PC-3 (cell line): ENCODE measurements at regions of chr7 and their contacts with region 1.

Region 1: GRCh38 chr7:13742811-13743210 is 246.7 kb downstream of the ETV1 start:
- DNase-seq: peak; percentile 69
- ATAC-seq: peak; percentile 73
- H3K4me3 ChIP-seq: no peak overlapping the region
- H3K27ac ChIP-seq: peak overlapping the region; percentile 56
- H3K4me1 ChIP-seq: peaks cover 24% of the 10 kb centered on the region
- H3K27me3 ChIP-seq: no peaks in the 10 kb centered on the region
- CTCF ChIP-seq: peak; percentile 78

Region 2: GRCh38 chr7:13279854-13280435 is 462.9 kb before region 1 on chr7:
- CTCF ChIA-PET with region 1: interaction called, 3 read pairs
- POLR2A ChIA-PET with region 1: no interaction called
- intact Hi-C with region 1: loop called (anchors 5 kb)
- DNase-seq: peak; percentile 63
- ATAC-seq: no peak; the same call in 1 of the 2 replicates
- H3K4me3 ChIP-seq: no peak overlapping the region
- H3K27ac ChIP-seq: no peak overlapping the region
- H3K4me1 ChIP-seq: no peaks in the 10 kb centered on the region
- H3K27me3 ChIP-seq: no peaks in the 10 kb centered on the region
- CTCF ChIP-seq: peak; percentile 69

Region 3: GRCh38 chr7:13524076-13524475 is 218.7 kb before region 1 on chr7:
- CTCF ChIA-PET with region 1: interaction called, 3 read pairs
- POLR2A ChIA-PET with region 1: no interaction called
- intact Hi-C with region 1: loop called (anchors 1 kb)
- DNase-seq: no peak
- ATAC-seq: peak; percentile 60; the same call in 1 of the 2 replicates
- H3K4me3 ChIP-seq: no peak overlapping the region
- H3K27ac ChIP-seq: no peak overlapping the region
- H3K4me1 ChIP-seq: peaks cover 4% of the 10 kb centered on the region; the same call in 1 of the 2 replicates
- H3K27me3 ChIP-seq: no peaks in the 10 kb centered on the region
- CTCF ChIP-seq: no peak

Region 4: GRCh38 chr7:13778967-13779366 is 36.2 kb after region 1 on chr7:
- CTCF ChIA-PET with region 1: no interaction called
- POLR2A ChIA-PET with region 1: no interaction called
- intact Hi-C with region 1: loop called (anchors 2 kb)
- DNase-seq: peak; percentile 92
- ATAC-seq: peak; percentile 95
- H3K4me3 ChIP-seq: no peak overlapping the region
- H3K27ac ChIP-seq: peak overlapping the region; percentile 95
- H3K4me1 ChIP-seq: peaks cover 26% of the 10 kb centered on the region
- H3K27me3 ChIP-seq: no peaks in the 10 kb centered on the region
- CTCF ChIP-seq: no peak

Region 5: GRCh38 chr7:14381306-14381705 is 638.5 kb after region 1 on chr7:
- CTCF ChIA-PET with region 1: no interaction called
- POLR2A ChIA-PET with region 1: no interaction called
- intact Hi-C with region 1: no loop called
- DNase-seq: peak; percentile 24
- ATAC-seq: peak; percentile 49
- H3K4me3 ChIP-seq: no peak overlapping the region
- H3K27ac ChIP-seq: no peak overlapping the region
- H3K4me1 ChIP-seq: peaks cover 10% of the 10 kb centered on the region; the same call in 1 of the 2 replicates
- H3K27me3 ChIP-seq: no peaks in the 10 kb centered on the region
- CTCF ChIP-seq: no peak

Region 6: DNA sequence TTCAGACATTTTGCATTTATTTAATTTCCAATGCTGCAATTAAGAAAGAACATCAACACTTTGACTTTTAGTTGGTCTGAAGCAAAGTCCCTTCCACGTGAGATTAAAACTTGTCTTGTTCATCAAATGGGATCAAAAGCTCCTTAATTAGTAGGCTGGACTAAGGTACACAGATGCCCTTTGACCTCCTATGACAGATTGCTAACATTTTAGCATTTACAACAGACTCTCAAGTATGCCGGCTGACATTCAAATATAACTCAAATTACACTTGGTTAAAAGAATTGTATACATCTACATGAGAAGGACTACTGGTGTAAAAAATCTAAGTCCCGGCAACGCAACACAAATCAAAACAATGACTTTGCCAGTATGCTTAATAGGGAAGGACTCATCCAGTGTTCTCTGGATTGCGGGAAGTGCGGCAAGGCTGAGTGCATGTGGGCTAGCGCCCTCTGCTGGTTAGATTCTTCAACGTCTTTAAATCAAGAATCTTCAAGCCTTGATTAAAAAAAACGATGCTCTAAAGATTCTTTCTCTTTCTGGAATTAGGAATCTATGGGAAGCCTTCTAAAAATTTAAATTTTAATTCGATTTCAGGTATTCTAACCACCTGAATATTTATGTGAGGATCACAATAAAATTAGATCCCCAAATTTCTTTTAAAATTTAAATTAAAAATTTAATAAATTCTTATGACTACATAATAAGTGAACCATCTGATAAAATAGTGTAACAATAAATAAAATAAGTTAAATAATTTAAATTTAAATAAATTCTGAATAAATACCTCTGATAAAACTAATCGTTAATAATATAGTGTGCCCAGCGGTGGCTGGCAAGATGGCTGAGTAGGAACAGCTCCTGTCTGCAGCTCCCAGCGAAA is 715.0 kb after region 1 on chr7:
- CTCF ChIA-PET with region 1: interaction called, 3 read pairs
- POLR2A ChIA-PET with region 1: no interaction called
- intact Hi-C with region 1: loop called (anchors 5 kb)
- DNase-seq: peak; percentile 84
- ATAC-seq: peak; percentile 92
- H3K4me3 ChIP-seq: peak overlapping the region; percentile 60
- H3K27ac ChIP-seq: no peak overlapping the region
- H3K4me1 ChIP-seq: 0 out of 2 replicates have a peak, but pooled peaks cover 4% of the 10 kb centered on the region
- H3K27me3 ChIP-seq: no peaks in the 10 kb centered on the region
- CTCF ChIP-seq: peak; percentile 85